Psoas muscle (tissue), 8 donors: ENCODE measurements at regions of chr6 and their contacts with region 1.

Region 1: DNA sequence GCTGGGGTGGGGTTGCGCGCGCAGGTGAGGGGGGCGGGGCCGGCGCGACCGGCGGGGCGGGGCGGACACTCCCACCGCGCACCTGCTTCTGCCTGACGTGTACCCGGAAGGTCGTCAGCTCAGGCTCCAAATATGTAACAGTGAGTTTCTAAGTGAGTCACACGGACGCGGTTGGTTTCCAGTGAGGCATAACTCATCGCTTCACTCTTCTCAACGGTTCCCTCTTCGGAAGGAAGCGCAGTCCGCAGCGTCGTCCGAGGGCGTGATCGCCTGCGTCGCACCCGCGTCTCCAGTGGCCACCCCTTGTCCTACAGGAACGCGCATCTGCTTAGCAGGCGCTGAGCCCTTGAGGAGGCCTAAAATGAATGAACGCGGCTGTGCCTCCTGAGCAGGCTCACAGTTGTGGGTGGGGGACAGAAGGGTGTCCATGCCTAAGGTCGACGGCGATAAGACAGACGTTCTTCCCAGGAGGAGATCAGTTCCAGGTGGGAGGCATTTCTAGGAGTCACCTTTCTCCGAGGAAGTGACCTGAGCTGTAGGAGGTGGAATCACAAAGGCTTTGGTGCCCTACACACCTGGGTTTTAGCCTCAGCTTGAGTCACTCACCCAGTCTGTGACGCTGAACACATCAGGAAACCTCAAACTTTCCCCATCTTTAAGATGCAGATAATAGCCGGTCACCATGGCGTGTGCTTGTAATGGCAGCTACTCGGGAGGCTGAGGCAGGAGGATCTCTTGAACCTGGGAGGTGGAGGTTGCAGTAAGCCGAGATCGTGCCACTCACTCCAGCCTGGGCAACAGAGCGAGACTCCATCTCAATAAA is 50.9 kb upstream of the EZR start:
- DNase-seq: peak in 1 of 2 donors; percentile 87
- ATAC-seq: peak; percentile 91 to 93 (median 92)
- H3K4me3 ChIP-seq: peak overlapping the region; percentile 64
- H3K27ac ChIP-seq: peak overlapping the region; percentile 86
- H3K4me1 ChIP-seq: no peaks in the 10 kb centered on the region
- H3K27me3 ChIP-seq: peaks cover 0 to 3% (median 2%) of the 10 kb centered on the region in 3 donors
- CTCF ChIP-seq: no peak

Region 2: GRCh38 chr6:158399040-158399700 is 470.9 kb before region 1 on chr6:
- intact Hi-C with region 1: no loop called
- DNase-seq: no peak
- ATAC-seq: no peak
- H3K4me3 ChIP-seq: no peak overlapping the region
- H3K27ac ChIP-seq: no peak overlapping the region
- H3K4me1 ChIP-seq: peaks cover 18% of the 10 kb centered on the region
- H3K27me3 ChIP-seq: no peaks in the 10 kb centered on the region
- CTCF ChIP-seq: no peak

Region 3: DNA sequence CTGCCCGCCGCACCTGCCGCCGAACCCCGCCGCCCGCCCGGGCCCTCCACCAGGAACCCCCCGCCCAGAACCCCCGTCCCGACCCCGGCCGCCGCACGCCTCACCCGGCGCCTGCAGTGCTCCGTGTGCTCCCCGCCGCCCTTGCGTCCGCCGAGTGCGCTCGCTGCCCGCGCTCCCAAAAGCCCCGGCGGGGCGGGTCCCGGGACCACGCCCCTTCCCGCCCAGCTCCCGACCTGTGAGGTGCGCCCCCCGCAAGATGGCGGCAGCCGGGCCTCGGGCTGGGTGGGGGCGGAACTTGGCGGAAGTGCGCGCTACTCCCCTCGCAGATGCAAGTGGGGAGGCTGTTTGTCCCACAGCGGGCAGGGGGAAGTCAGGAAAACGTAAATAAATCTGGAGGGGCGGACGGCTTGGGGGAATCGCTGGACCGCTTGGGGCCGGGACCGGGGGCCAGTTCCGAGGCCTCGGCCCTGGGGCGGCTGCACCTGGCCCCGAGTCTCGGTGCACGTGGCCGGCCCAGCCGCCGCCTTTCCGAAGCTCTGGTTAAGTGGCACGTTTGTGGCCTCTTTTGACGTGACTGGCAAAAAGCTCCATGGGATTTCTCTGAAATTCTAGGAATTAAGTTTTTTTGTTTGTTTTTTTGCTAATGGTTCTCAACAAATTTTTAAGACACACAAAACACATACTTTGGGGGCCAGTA is 50.7 kb before region 1 on chr6 and contains the start of gene EZR:
- intact Hi-C with region 1: loop called in 1 of 2 experiments (anchors 5 kb)
- DNase-seq: peak; percentile 72 to 84
- ATAC-seq: peak; percentile 52 to 75 (median 68)
- H3K4me3 ChIP-seq: peak within 1 kb of the TSS; percentile 88
- H3K27ac ChIP-seq: peak within 1 kb of the TSS; percentile 86
- H3K4me1 ChIP-seq: peaks cover 21% of the 10 kb centered on the region
- H3K27me3 ChIP-seq: no peaks in the 10 kb centered on the region
- CTCF ChIP-seq: no peak
- total RNA-seq, gene EZR: 25.9 to 61.7 (median 33.3) TPM